ENCODE measurements at regions of chr1 and their contacts with region 1.

Region 1: DNA sequence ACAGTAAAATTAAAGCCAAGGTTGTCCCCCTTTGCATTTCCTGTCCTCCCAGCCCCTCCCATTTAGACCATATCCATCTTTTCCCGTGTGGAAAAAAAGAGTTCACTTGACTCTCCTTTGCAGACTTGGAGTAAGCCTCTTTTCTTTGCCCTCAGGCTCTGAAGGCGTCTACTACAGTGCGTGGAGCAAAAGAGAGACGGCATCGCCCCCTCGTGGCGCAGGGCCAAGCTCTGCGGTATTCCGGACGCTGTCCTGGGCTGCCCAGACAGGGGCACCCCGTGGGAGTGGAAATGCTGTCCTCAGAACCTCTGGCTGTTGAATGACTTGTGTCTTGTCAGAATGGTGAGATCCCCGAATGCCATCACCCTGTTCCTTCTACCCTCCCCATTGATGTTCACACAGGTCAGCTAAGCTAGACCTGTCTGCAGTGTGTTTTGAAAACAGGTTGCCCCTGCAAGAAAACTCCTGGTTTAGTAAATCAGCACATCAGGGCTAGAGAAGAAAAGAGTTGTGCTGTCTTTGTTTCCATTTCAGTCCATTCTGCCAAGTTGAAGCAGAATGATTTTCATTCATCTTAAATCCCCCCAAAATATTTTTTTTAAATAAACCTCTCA is 12.3 kb upstream of the GJA8 start:
- DNase-seq: peak; percentile 92
- ATAC-seq: peak; percentile 96
- H3K4me3 Mint-ChIP-seq: no peak overlapping the region
- H3K27ac Mint-ChIP-seq: no peak overlapping the region
- H3K4me1 Mint-ChIP-seq: peaks cover 21% of the 10 kb centered on the region
- H3K27me3 Mint-ChIP-seq: no peaks in the 10 kb centered on the region; the same call in 1 of the 2 replicates
- CTCF ChIP-seq: peak; percentile 68; the same call in 1 of the 2 replicates

Region 2: DNA sequence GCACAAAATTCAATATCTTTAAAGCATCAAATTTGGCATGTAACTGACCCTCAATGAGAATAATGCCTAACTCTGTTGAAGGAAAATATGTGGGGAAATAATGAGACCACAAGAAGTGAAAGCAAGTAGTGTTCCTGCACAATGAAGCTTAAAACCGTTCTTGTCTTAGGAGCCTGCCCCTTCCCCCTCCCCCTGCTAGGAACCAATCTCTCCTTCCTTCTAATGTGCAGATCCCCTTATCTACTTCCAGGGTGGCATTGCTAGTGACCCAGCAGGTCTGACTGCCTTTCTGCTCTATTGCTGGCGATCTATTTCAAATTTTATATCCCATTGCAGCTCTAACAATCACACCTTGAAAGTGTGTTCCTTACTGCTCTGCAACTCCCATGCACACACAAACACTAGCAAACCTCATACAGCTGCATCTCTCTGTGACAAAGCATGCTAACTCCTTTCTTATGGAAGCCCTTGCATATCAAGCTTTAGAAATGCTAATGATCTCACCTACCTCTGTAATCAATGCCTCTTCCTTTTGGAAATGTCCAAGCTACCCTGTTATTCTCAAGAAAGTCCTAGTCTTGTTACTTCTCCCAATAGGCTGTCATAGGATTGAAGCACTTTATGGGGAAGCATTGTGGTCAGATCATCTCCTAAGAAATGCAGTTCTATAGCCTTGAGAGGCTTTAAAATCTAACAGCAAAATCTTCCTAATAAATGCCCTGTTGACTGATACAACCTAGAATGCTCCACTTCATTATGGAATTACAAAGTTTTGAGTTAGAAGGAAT is 322.5 kb before region 1 on chr1:
- CTCF ChIA-PET with region 1: no interaction called
- POLR2A ChIA-PET with region 1: no interaction called
- DNase-seq: no peak
- ATAC-seq: peak; percentile 95
- H3K4me3 Mint-ChIP-seq: peak overlapping the region; percentile 66
- H3K27ac Mint-ChIP-seq: peak overlapping the region; percentile 99
- H3K4me1 Mint-ChIP-seq: peaks cover 78% of the 10 kb centered on the region
- H3K27me3 Mint-ChIP-seq: no peaks in the 10 kb centered on the region
- CTCF ChIP-seq: no peak

Region 3: GRCh38 chr1:147640553-147641165 is 249.6 kb before region 1 on chr1:
- CTCF ChIA-PET with region 1: interaction called, 28 read pairs
- POLR2A ChIA-PET with region 1: no interaction called
- DNase-seq: peak; percentile 90
- ATAC-seq: peak; percentile 98
- H3K4me3 Mint-ChIP-seq: no peak overlapping the region
- H3K27ac Mint-ChIP-seq: no peak overlapping the region
- H3K4me1 Mint-ChIP-seq: peaks cover 11% of the 10 kb centered on the region
- H3K27me3 Mint-ChIP-seq: no peaks in the 10 kb centered on the region
- CTCF ChIP-seq: peak; percentile 84

Region 4: GRCh38 chr1:147700042-147701006 is 190.0 kb before region 1 on chr1:
- CTCF ChIA-PET with region 1: interaction called, 44 read pairs
- POLR2A ChIA-PET with region 1: no interaction called
- DNase-seq: peak; percentile 71
- ATAC-seq: peak; percentile 98
- H3K4me3 Mint-ChIP-seq: no peak overlapping the region
- H3K27ac Mint-ChIP-seq: no peak overlapping the region
- H3K4me1 Mint-ChIP-seq: peaks cover 7% of the 10 kb centered on the region
- H3K27me3 Mint-ChIP-seq: no peaks in the 10 kb centered on the region; the same call in 1 of the 2 replicates
- CTCF ChIP-seq: peak; percentile 67

Region 5: DNA sequence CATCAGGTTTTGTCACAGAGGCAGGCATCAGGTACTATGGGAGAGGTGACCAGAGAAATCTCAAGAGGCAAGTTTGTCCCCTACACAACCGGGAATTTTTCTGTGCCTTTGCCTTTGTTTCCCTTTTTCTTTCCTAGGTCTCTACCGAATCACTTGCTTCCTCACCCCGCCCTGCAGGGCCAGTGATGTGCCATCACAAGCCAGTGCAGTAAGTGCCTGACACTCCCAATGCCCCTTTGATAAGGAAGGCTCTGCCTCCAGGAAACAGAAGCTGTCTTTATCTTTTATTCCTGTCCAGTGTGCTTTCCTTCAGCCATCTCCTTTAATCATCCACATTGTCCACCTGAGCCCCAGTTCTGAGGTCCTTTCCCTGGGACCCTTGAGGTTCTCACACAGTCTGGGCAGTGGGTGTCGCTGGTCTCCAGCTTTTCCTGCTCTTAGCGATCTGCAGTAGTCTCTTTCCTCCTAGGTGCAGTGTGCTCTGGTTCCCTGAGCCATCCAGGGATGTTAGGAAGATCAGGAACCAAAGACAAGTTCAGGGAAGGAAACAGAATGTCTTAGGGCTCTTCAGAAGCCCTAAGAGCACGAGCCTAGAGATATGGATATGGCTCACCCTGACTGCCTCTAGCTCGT is 166.5 kb before region 1 on chr1:
- CTCF ChIA-PET with region 1: interaction called, 143 read pairs
- POLR2A ChIA-PET with region 1: interaction called, 4 read pairs
- DNase-seq: peak; percentile 71
- ATAC-seq: peak; percentile 96
- H3K4me3 Mint-ChIP-seq: no peak overlapping the region
- H3K27ac Mint-ChIP-seq: no peak overlapping the region; the same call in 1 of the 2 replicates
- H3K4me1 Mint-ChIP-seq: peaks cover 30% of the 10 kb centered on the region
- H3K27me3 Mint-ChIP-seq: no peaks in the 10 kb centered on the region
- CTCF ChIP-seq: no peak

Region 6: GRCh38 chr1:147840907-147841306 is 49.4 kb before region 1 on chr1:
- CTCF ChIA-PET with region 1: interaction called, 14 read pairs
- POLR2A ChIA-PET with region 1: no interaction called
- DNase-seq: no peak
- ATAC-seq: 0 out of 2 replicates have a peak, but pooled peaks have one; percentile 15
- H3K4me3 Mint-ChIP-seq: no peak overlapping the region
- H3K27ac Mint-ChIP-seq: no peak overlapping the region
- H3K4me1 Mint-ChIP-seq: peaks cover 48% of the 10 kb centered on the region
- H3K27me3 Mint-ChIP-seq: peaks cover 2% of the 10 kb centered on the region
- CTCF ChIP-seq: no peak

Region 7: DNA sequence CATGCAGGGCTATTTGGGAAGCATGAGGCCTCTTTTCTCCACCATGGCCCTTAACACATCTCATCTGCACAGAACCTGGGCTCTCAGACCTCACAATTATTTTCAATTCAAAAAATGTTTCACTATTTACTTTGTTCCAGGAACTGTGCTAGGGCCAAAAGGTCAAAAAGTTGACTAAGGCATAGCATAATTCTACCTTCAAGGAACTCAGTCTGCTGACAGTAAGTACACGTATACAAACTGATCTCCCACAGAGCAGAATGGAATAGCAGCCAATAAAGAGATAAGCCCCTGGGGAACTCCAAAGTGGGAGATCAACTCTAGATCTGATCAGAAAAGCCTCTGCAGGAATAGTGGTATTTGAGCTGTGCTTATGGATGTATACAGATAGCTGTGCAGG is 21.3 kb before region 1 on chr1:
- CTCF ChIA-PET with region 1: interaction called, 12 read pairs
- POLR2A ChIA-PET with region 1: no interaction called
- DNase-seq: no peak
- ATAC-seq: no peak
- H3K4me3 Mint-ChIP-seq: no peak overlapping the region
- H3K27ac Mint-ChIP-seq: no peak overlapping the region
- H3K4me1 Mint-ChIP-seq: no peaks in the 10 kb centered on the region
- H3K27me3 Mint-ChIP-seq: no peaks in the 10 kb centered on the region; the same call in 1 of the 2 replicates
- CTCF ChIP-seq: no peak

Region 8: DNA sequence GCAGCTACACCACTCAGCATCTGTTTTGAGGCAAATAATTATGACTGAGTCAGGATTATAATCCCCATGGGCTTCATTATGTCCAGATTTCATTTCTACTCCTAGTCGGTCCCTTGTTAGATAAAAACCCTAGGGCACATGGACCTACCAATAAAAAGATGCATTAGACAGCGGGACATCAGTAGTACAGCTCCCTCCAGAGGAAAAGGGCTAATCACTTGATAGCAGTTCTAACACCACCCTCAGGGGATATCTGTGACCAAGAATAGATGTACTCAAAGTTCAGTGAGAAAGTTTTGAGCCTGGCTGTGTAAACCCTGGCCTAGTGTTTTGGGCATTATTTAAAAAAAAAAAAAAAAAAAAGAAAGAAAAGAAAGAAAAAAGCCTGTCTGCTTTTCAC is 22.3 kb after region 1 on chr1:
- CTCF ChIA-PET with region 1: interaction called, 36 read pairs
- POLR2A ChIA-PET with region 1: no interaction called
- DNase-seq: no peak
- ATAC-seq: no peak
- H3K4me3 Mint-ChIP-seq: no peak overlapping the region
- H3K27ac Mint-ChIP-seq: no peak overlapping the region
- H3K4me1 Mint-ChIP-seq: no peaks in the 10 kb centered on the region
- H3K27me3 Mint-ChIP-seq: peaks cover 4% of the 10 kb centered on the region; the same call in 1 of the 2 replicates
- CTCF ChIP-seq: no peak

Region 9: GRCh38 chr1:148160343-148161052 is 270.2 kb after region 1 on chr1:
- CTCF ChIA-PET with region 1: no interaction called
- POLR2A ChIA-PET with region 1: no interaction called
- DNase-seq: no peak
- ATAC-seq: no peak
- H3K4me3 Mint-ChIP-seq: no peak overlapping the region
- H3K27ac Mint-ChIP-seq: no peak overlapping the region
- H3K4me1 Mint-ChIP-seq: peaks cover 31% of the 10 kb centered on the region
- H3K27me3 Mint-ChIP-seq: no peaks in the 10 kb centered on the region; the same call in 1 of the 2 replicates
- CTCF ChIP-seq: no peak